Caco-2 (cell line): ENCODE measurements at regions of chr4 and their contacts with region 1.

Region 1: GRCh38 chr4:16026160-16026761 is 57.6 kb downstream of the PROM1 start:
- DNase-seq: peak in 1 of 2 experiments; percentile 62
- H3K4me3 ChIP-seq: no peak overlapping the region
- H3K4me3 Mint-ChIP-seq: no peak overlapping the region
- H3K27ac Mint-ChIP-seq: no peak overlapping the region
- H3K4me1 ChIP-seq: peaks cover 39% of the 10 kb centered on the region
- H3K4me1 Mint-ChIP-seq: peaks cover 12% of the 10 kb centered on the region
- H3K27me3 ChIP-seq: no peaks in the 10 kb centered on the region
- H3K27me3 Mint-ChIP-seq: no peaks in the 10 kb centered on the region
- CTCF ChIP-seq: peak; percentile 56 to 70

Region 2: DNA sequence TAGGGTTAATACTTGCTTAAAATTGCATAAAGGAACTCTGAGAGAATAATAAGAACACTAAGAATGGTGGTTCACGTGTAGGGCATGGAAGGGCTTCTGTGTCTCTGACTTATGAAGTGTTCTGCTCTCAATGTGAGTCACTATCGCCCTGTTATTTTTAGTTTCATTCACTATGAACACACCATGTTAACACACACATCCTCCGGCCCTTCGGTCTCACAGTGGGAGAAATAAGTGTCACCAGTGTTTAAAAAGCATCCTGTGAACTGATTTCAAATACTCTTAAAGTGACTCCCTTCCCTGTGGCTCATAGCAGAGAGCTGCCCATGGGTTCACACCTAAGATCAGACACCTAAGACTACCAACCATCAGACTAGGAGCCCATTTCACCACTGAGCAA is 29.5 kb before region 1 on chr4:
- CTCF ChIA-PET with region 1: no interaction called
- POLR2A ChIA-PET with region 1: no interaction called
- intact Hi-C with region 1: no loop called
- DNase-seq: no peak
- H3K4me3 ChIP-seq: no peak overlapping the region
- H3K4me3 Mint-ChIP-seq: no peak overlapping the region
- H3K27ac Mint-ChIP-seq: no peak overlapping the region
- H3K4me1 ChIP-seq: no peaks in the 10 kb centered on the region
- H3K4me1 Mint-ChIP-seq: no peaks in the 10 kb centered on the region
- H3K27me3 ChIP-seq: no peaks in the 10 kb centered on the region
- H3K27me3 Mint-ChIP-seq: no peaks in the 10 kb centered on the region
- CTCF ChIP-seq: no peak

Region 3: DNA sequence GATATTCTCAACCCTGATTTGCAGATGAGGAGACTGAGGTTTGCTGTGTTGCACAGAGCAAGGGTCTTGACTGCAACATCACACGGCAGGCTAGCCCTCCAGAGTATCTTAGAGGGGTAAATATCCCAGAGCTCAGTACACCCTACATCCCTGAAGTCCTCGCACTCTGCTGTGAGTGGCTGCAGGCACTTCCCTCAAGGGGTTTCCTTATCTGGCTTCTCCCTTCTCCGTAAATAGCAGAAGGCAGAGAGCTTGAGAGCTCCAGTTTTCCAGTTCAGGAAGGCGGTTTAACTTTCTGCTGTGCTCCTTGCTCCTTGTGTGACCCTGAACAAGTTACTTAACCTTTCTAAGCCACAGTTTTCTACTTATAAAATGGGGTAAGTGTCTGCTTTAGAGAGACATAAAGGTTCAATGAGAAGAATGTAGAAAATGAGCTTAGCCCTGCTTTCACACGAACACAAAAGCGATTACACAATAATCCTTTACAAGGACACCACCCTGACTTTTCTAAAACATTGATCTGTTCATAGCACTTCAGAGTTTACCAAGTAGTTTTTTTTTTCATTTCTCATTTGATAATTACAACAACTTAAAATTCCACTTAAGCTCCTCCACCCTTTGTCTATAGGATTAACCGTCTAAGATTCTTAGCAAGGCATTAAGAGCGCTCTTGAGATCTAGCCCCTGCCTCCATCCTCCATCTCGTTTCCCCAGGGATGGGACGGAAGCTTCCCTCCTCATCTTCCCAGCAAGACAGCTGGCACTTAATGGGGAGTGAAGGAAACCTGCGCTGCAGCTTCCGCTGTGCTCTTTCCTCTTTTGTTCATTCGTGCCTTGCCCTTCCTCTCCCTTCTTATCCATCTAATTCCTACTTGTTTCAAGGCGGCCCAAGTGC is 131.6 kb after region 1 on chr4:
- CTCF ChIA-PET with region 1: no interaction called
- POLR2A ChIA-PET with region 1: interaction called, 5 read pairs
- intact Hi-C with region 1: loop called (anchors 2 kb)
- DNase-seq: peak in 1 of 2 experiments; percentile 5
- H3K4me3 ChIP-seq: no peak overlapping the region
- H3K4me3 Mint-ChIP-seq: no peak overlapping the region
- H3K27ac Mint-ChIP-seq: no peak overlapping the region
- H3K4me1 ChIP-seq: peaks cover 19% of the 10 kb centered on the region; the same call in 1 of the 2 replicates
- H3K4me1 Mint-ChIP-seq: peaks cover 18% of the 10 kb centered on the region
- H3K27me3 ChIP-seq: no peaks in the 10 kb centered on the region
- H3K27me3 Mint-ChIP-seq: no peaks in the 10 kb centered on the region
- CTCF ChIP-seq: no peak

Region 4: DNA sequence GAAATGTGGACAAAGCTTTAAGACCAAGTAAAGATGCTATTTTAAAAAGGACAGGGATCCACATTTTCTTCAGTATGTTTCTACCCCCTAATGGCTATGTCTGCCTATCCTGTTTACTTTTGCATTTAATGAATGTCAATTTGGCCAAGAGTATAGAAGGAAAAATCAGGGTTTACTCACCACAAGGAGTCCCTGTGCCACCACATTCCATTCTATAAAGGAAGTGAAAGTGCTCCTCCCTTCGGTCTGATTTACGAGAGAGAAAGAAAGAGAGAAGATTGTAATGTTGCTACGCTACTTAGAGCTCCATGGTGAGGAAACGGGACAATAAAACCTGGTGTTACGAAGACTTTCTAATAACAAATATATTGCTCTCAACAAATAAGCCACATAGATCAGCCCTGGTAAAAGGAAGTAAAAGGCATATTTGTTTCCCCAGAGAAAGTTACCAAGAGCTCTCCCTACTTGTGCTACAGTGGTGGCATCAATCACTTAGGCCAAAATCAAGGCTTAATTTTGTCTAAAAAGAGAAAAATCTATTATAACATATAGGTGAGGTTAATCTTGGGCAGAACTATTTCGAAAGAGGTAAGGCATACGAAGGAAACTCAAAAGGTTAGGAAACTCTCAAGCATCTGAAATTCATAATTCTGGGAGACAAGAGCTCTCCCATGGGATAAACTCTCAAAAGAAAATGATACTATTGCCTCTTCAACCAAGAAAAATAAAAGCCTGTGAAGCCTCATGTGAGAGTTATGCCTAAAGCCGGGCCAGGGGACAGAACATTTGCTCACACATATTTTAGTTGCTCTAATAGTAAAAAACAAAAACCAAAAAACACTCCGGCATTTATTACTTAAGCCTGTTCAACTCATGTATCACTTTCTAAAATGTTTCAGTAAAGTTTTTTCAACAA is 170.5 kb after region 1 on chr4:
- CTCF ChIA-PET with region 1: interaction called, 4 read pairs
- POLR2A ChIA-PET with region 1: no interaction called
- intact Hi-C with region 1: loop called (anchors 1 kb)
- DNase-seq: peak in 1 of 2 experiments; percentile 67
- H3K4me3 ChIP-seq: no peak overlapping the region
- H3K4me3 Mint-ChIP-seq: peak overlapping the region; percentile 52
- H3K27ac Mint-ChIP-seq: peak overlapping the region; percentile 83
- H3K4me1 ChIP-seq: no peaks in the 10 kb centered on the region; the same call in 1 of the 2 replicates
- H3K4me1 Mint-ChIP-seq: peaks cover 14% of the 10 kb centered on the region
- H3K27me3 ChIP-seq: no peaks in the 10 kb centered on the region
- H3K27me3 Mint-ChIP-seq: no peaks in the 10 kb centered on the region
- CTCF ChIP-seq: peak in 1 of 2 experiments; percentile 41